ENCODE measurements at regions of chr19 and their contacts with region 1.

Region 1: DNA sequence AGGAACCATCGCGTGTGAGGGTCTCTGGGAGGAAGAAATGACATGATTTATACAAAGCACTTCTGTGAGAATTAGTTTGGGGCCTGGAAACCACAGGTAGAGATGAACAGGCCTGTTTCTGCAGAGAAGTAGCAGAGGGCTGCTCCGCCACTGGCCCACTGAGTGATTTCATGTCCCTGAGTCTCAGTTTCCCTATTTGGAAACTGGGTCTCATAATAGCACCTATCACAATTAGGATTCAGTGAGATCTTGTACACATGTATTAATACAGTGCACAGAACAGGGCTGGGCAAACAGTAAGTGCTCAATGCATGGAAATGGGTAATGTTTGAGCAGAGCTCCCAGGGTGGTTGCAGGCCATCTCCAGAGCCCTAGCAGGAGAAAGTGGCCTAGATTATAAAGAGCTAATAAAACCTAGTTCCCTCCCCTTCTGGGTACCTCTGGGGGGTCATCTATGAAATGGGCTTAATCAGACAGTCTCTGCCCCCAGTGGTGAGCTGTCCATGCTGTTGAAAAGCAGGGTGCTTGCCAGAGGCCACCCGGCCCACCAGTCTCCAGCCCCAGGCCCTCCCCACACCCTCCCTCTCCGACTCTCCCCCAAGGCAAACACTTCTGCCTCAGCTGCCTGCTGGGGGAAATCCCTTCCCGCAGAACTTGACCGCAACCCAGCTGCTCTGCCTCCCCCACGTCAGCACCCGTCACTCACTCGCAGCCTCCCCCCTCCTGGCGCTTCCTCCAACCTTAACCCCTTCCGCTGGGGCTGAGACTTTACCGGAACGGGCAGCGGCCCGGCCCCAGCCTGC is 4.5 kb downstream of the BCL3 start:
- DNase-seq: peak; percentile 82 to 97 (median 94)
- ATAC-seq: peak; percentile 78 to 85
- H3K4me3 Mint-ChIP-seq: peak overlapping the region; percentile 88 to 97 (median 93)
- H3K27ac Mint-ChIP-seq: peak overlapping the region; percentile 89 to 100 (median 98)
- H3K4me1 Mint-ChIP-seq: peaks cover 31 to 71% (median 66%) of the 10 kb centered on the region in 4 donors
- H3K27me3 Mint-ChIP-seq: peaks cover 0 to 2% (median 0%) of the 10 kb centered on the region in 5 donors

Region 2: DNA sequence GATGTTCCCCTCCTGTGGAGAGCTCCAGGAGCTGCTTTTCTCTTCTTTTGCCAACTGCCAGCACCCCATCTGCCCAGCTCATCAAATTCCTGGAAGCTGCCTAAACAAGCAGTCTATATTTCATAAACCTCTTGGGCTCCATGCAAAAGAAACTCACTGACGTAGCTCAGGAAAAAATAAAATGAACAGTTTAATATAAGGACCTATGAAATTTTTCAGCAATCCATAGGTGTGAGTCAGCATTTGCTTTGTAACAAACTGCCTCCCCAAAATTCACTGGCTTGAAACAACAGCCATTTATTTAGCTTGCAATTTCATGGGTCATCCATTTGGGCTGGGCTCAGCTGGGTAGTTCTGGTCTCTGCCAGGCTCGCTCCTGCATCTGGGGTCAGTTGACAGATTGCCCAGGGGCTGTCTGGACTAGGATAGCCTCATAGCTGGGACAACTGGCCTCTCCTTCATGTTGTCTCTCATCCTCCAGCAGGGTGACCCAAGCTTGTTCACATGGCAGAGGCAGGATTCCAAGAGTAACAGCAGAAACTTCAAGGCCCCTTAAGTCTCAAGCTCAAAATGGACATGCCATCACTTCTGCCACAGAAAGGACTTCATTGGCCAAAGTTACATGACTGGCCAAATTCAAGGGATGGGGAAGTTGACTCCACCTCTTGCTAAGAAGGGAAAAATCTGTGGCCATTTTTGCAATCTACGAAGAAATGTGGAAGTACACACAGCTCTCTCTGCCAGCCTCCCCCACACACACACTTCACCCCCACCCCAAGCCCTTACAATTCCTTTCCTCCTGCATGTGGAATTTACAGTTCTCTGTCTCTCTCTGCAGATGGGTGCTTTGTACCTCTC is 117.2 kb before region 1 on chr19:
- POLR2A ChIA-PET with region 1: no interaction called
- DNase-seq: no peak
- ATAC-seq: no peak
- H3K4me3 Mint-ChIP-seq: no peak overlapping the region
- H3K27ac Mint-ChIP-seq: no peak overlapping the region
- H3K4me1 Mint-ChIP-seq: no peaks in the 10 kb centered on the region
- H3K27me3 Mint-ChIP-seq: peaks cover 4 to 20% (median 15%) of the 10 kb centered on the region in 5 donors

Region 3: GRCh38 chr19:44764975-44765948 is 12.2 kb after region 1 on chr19:
- POLR2A ChIA-PET with region 1: interaction called, 18 read pairs
- DNase-seq: no peak
- ATAC-seq: no peak
- H3K4me3 Mint-ChIP-seq: no peak overlapping the region
- H3K27ac Mint-ChIP-seq: peak overlapping the region in 5 of 10 donors; percentile 22 to 72 (median 34)
- H3K4me1 Mint-ChIP-seq: peaks cover 10 to 63% (median 50%) of the 10 kb centered on the region in 4 donors
- H3K27me3 Mint-ChIP-seq: no peaks in the 10 kb centered on the region

Region 4: GRCh38 chr19:44770550-44771257 is 17.7 kb after region 1 on chr19:
- POLR2A ChIA-PET with region 1: interaction called, 18 read pairs
- DNase-seq: peak; percentile 92 to 98 (median 97)
- ATAC-seq: peak; percentile 98 to 99
- H3K4me3 Mint-ChIP-seq: peak overlapping the region; percentile 35 to 81 (median 65)
- H3K27ac Mint-ChIP-seq: peak overlapping the region; percentile 70 to 93 (median 87)
- H3K4me1 Mint-ChIP-seq: peaks cover 9 to 33% (median 30%) of the 10 kb centered on the region in 4 donors
- H3K27me3 Mint-ChIP-seq: no peaks in the 10 kb centered on the region